PC-9 (cell line): ENCODE measurements at regions of chr9 and their contacts with region 1.

Region 1: DNA sequence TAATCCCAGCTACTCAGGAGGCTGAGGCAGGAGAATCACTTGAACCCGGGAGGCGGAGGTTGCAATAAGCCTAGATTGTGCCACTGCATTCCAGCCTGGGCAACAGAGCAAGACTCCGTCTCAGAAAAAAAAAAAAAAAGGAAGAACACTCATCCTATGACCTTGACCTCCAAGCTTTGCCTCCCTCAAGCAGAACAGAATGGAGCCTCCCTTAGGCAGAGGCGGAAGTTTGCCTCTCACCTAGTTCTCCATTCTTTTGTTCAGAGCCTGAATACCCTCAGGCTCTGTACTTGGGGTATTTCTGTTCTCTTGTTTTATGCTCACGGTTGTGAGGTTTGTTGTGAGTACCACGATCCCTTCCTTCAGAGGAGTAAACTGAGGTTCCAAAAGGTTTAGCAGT is 6.6 kb downstream of the FXN start:
- DNase-seq: no peak
- H3K4me3 ChIP-seq: no peak overlapping the region
- H3K27ac ChIP-seq: no peak overlapping the region
- H3K4me1 ChIP-seq: 0 out of 2 replicates have a peak, but pooled peaks cover 6% of the 10 kb centered on the region
- H3K27me3 ChIP-seq: no peaks in the 10 kb centered on the region
- CTCF ChIP-seq: no peak

Region 2: DNA sequence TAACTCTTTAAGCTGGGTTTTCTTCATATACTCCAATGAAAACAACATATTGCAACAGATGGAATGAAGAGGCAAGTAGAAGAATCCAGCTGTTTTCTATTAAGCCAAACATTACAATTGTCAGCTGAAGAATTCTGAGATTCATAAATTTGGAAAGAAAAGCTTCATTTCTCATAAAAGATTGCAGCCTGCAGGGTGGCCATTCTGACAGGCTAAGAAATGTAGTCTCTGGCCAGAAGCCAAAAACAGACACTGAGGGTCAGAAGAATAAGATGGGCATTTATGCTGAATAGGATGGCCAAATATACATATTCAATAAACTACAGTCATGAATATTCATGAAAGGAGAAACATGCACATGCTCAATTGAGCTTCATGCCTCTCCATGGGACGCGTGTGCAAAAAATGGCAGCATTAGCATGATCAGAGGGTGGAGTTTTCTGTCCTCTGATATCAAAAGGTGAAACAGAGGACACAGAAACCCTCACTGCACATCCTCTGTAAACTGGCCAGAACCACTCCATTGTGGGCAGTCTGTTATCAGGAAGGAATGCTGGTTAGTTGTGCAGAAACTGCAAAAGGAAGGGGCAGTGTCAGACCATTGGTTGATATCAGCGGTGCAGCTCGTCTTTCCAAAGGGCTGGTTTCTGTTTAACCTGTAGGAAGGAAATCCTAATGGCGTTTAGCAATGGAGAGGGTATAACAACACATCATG is 43.6 kb after region 1 on chr9:
- CTCF ChIA-PET with region 1: no interaction called
- POLR2A ChIA-PET with region 1: no interaction called
- intact Hi-C with region 1: no loop called
- DNase-seq: no peak
- H3K4me3 ChIP-seq: no peak overlapping the region
- H3K27ac ChIP-seq: no peak overlapping the region
- H3K4me1 ChIP-seq: peaks cover 7% of the 10 kb centered on the region; the same call in 1 of the 2 replicates
- H3K27me3 ChIP-seq: no peaks in the 10 kb centered on the region
- CTCF ChIP-seq: no peak

Region 3: GRCh38 chr9:69232135-69232534 is 190.0 kb after region 1 on chr9:
- CTCF ChIA-PET with region 1: no interaction called
- POLR2A ChIA-PET with region 1: interaction called, 26 read pairs
- intact Hi-C with region 1: no loop called
- DNase-seq: no peak
- H3K4me3 ChIP-seq: no peak overlapping the region
- H3K27ac ChIP-seq: no peak overlapping the region
- H3K4me1 ChIP-seq: no peaks in the 10 kb centered on the region
- H3K27me3 ChIP-seq: no peaks in the 10 kb centered on the region
- CTCF ChIP-seq: no peak

Region 4: GRCh38 chr9:69307446-69308216 is 265.5 kb after region 1 on chr9:
- CTCF ChIA-PET with region 1: no interaction called
- POLR2A ChIA-PET with region 1: no interaction called
- intact Hi-C with region 1: no loop called
- DNase-seq: no peak
- H3K4me3 ChIP-seq: no peak overlapping the region
- H3K27ac ChIP-seq: no peak overlapping the region
- H3K4me1 ChIP-seq: no peaks in the 10 kb centered on the region
- H3K27me3 ChIP-seq: no peaks in the 10 kb centered on the region
- CTCF ChIP-seq: no peak

Region 5: DNA sequence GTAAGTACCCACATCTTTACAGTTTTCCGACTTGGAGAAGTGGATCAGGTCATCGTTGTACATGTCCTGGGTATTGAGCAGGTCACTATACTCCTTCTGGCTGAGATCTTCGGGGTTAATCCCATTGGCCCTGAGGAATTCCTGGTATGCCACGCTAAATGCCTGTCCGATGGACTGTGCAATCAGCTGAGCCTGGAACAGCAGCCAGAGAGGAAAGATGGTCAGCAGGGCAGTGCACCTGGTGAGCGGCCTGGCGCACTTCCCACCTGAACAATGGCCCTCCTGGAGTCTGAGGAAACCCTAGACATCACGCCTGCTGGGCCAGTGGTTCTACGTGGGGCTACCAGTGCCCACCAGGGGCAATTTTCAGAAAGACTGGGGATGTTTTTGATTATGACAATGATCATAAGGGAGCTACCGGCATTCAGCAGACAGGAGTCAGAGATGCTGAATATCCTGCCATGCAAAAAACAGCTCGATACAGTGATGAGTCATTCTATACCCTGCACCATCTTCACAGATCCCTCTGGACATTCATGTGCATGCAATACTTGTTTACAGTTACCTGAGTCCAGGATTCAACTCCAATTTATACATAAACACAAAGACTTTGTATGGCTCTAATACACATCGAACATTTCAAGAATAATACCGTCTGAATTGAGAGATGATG is 410.1 kb after region 1 on chr9:
- CTCF ChIA-PET with region 1: no interaction called
- POLR2A ChIA-PET with region 1: no interaction called
- intact Hi-C with region 1: no loop called
- DNase-seq: peak; percentile 60 to 63
- H3K4me3 ChIP-seq: no peak overlapping the region
- H3K27ac ChIP-seq: no peak overlapping the region
- H3K4me1 ChIP-seq: no peaks in the 10 kb centered on the region
- H3K27me3 ChIP-seq: no peaks in the 10 kb centered on the region
- CTCF ChIP-seq: no peak